Mammary epithelial cell (primary cell): ENCODE measurements at regions of chr1 and their contacts with region 1.

Region 1: GRCh38 chr1:88247666-88248065 is 436.4 kb upstream of the PKN2 start:
- DNase-seq: no peak
- H3K4me3 ChIP-seq: no peak overlapping the region
- H3K27ac ChIP-seq: no peak overlapping the region
- H3K4me1 ChIP-seq: no peaks in the 10 kb centered on the region
- H3K27me3 ChIP-seq: peaks cover 2% of the 10 kb centered on the region
- CTCF ChIP-seq: no peak

Region 2: GRCh38 chr1:88286716-88287115 is 39.0 kb after region 1 on chr1:
- CTCF ChIA-PET with region 1: no interaction called
- dilution Hi-C with region 1: no loop called
- in situ Hi-C with region 1: no loop called
- intact Hi-C with region 1: loop called (anchors 2 kb)
- DNase-seq: no peak
- H3K4me3 ChIP-seq: no peak overlapping the region
- H3K27ac ChIP-seq: no peak overlapping the region
- H3K4me1 ChIP-seq: no peaks in the 10 kb centered on the region
- H3K27me3 ChIP-seq: no peaks in the 10 kb centered on the region
- CTCF ChIP-seq: no peak

Region 3: GRCh38 chr1:88484881-88485280 is 237.2 kb after region 1 on chr1:
- CTCF ChIA-PET with region 1: no interaction called
- dilution Hi-C with region 1: no loop called
- in situ Hi-C with region 1: no loop called
- intact Hi-C with region 1: no loop called
- DNase-seq: no peak
- H3K4me3 ChIP-seq: no peak overlapping the region
- H3K27ac ChIP-seq: no peak overlapping the region
- H3K4me1 ChIP-seq: no peaks in the 10 kb centered on the region
- H3K27me3 ChIP-seq: no peaks in the 10 kb centered on the region
- CTCF ChIP-seq: no peak